ENCODE measurements at regions of chr1 and their contacts with region 1.

Region 1: DNA sequence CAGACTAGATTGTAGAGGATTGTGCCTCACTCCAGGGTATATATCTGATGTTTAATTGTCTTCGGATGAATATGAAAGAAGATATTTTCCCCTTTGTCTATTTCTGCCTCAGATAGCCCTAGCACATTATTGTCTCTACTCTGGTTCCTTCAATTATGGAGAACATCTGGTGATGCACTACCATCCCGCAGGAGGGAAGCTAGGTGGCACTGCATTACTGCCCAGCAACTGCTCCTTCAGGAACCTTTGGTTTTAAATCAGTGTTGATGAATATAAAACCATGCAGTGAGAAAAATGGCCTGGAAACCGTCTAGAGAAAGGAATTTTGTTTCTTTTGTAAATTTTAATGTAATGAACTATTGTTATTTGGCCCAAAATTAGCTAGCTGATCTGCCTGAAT is 68.5 kb downstream of the GPR88 start:
- H3K4me3 Mint-ChIP-seq: no peak overlapping the region
- H3K27ac Mint-ChIP-seq: no peak overlapping the region
- H3K4me1 Mint-ChIP-seq: peaks cover 5% of the 10 kb centered on the region
- H3K27me3 Mint-ChIP-seq: no peaks in the 10 kb centered on the region

Region 2: DNA sequence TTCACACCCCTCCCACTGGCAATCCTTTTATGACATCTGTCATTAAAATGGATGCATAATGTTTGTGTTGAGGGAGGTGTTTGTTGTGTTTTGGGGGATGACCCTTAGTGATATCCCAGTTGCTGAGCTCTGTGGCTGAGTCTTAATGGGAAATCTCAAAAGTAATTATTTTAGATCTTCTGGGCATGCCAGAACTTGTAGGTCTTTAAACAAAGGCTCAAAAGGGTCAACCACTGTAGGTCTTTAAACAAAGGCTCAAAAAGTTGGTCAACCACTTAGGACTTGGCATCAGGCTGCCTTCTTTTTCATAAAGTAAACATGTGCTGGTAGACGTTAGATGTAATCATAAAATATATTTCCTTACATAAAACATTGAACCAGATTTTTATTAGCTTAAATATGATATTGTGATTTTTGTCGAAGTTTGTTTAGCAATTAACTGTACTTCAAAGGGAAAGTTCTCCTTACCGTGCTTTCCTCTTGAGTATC is 176.1 kb before region 1 on chr1:
- intact Hi-C with region 1: no loop called
- H3K4me3 Mint-ChIP-seq: no peak overlapping the region
- H3K27ac Mint-ChIP-seq: no peak overlapping the region
- H3K4me1 Mint-ChIP-seq: no peaks in the 10 kb centered on the region
- H3K27me3 Mint-ChIP-seq: no peaks in the 10 kb centered on the region

Region 3: DNA sequence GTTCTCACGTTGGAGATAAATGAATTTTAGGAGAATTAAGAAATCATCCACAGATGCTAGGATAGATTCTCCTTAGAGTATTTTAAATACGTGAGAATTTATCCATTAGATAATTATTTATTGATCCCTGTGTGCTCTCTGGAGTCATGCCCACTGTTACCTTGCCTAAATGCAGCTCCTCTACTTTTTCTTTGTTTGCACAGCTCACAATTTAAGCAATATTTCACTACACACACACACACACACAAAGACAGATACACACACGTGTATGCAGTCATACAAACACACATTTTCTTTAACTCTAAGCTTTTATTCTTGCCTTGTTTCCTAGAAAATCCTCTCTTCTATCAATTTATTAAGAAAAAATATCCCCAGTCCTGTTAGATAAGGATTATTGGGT is 16.8 kb before region 1 on chr1:
- intact Hi-C with region 1: no loop called
- H3K4me3 Mint-ChIP-seq: no peak overlapping the region
- H3K27ac Mint-ChIP-seq: no peak overlapping the region
- H3K4me1 Mint-ChIP-seq: peaks cover 7% of the 10 kb centered on the region
- H3K27me3 Mint-ChIP-seq: no peaks in the 10 kb centered on the region

Region 4: DNA sequence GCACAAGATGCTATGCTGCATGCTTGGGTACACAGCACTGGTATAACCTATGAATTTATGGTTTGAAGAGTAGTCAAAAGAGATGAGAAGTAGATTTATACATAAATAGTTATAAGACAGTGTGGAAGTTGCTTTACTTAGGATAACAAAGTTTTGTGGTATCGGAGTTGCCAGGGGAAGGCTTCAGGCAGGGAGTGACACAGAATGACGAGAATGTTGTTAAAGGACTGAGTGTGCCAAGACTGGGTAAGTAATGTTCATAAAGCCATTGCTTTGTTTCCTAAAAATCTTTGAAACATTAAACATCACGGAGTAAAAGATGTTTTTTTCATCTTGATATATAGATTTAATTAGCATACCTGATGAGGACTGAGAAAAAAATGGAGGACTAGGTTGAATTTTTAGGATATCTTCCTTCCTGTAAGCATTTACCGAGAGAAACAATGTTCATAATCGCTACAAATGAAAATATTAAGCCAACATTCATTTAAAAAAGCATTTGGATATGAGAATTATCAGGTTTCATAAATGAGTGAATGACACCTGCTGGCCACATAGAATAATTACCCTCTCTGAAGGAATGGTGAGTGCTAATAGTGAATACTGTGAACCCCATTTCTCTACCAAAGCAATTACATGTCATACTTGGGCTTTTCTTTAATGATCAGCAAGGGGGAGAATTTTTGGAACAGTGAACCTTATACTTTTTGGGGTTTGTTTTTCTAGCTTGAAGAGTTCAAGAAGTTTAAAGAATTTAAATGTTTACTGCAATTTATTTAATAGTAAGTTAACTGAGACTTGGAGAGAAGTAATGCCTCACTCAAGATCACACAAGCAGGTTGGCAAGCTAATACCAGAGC is 259.8 kb after region 1 on chr1:
- intact Hi-C with region 1: loop called (anchors 1 kb)
- H3K4me3 Mint-ChIP-seq: no peak overlapping the region
- H3K27ac Mint-ChIP-seq: no peak overlapping the region
- H3K4me1 Mint-ChIP-seq: no peaks in the 10 kb centered on the region
- H3K27me3 Mint-ChIP-seq: no peaks in the 10 kb centered on the region

Region 5: GRCh38 chr1:101112051-101112780 is 505.8 kb after region 1 on chr1:
- intact Hi-C with region 1: no loop called
- H3K4me3 Mint-ChIP-seq: no peak overlapping the region
- H3K27ac Mint-ChIP-seq: peak overlapping the region; percentile 91
- H3K4me1 Mint-ChIP-seq: peaks cover 26% of the 10 kb centered on the region
- H3K27me3 Mint-ChIP-seq: no peaks in the 10 kb centered on the region